HCT116 (cell line): ENCODE measurements at regions of chr2 and their contacts with region 1.

Region 1: GRCh38 chr2:180980106-180980942 is at the start of gene UBE2E3:
- DNase-seq: peak; percentile 48
- ATAC-seq: peak; percentile 86
- H3K4me3 ChIP-seq: peak within 1 kb of the TSS; percentile 87 to 88
- H3K27ac ChIP-seq: peak within 1 kb of the TSS; percentile 56
- H3K4me1 ChIP-seq: peaks cover 19 to 34% of the 10 kb centered on the region in 2 experiments; a peak in 3 of 4 replicates
- H3K27me3 ChIP-seq: no peaks in the 10 kb centered on the region
- CTCF ChIP-seq: peak in 2 of 3 experiments; percentile 62 to 65; a peak in 4 of 6 replicates
- POLR2A ChIP-seq: no peak
- RAD21 ChIP-seq: peak; percentile 34; the same call in 1 of the 2 replicates
- total RNA-seq, gene UBE2E3: 64.2 TPM

Region 2: GRCh38 chr2:180125245-180125962 is 854.9 kb before region 1 on chr2:
- CTCF ChIA-PET with region 1: interaction called, 13 read pairs
- POLR2A ChIA-PET with region 1: no interaction called
- RAD21 ChIA-PET with region 1: interaction called in 1 of 2 experiments, 3 read pairs
- intact Hi-C with region 1: no loop called
- DNase-seq: peak; percentile 84
- ATAC-seq: peak; percentile 92
- H3K4me3 ChIP-seq: 0 out of 4 replicates have a peak overlapping the region, but pooled peaks of 1 of the 2 experiments have one; percentile 9
- H3K27ac ChIP-seq: no peak overlapping the region
- H3K4me1 ChIP-seq: peaks cover 0 to 14% of the 10 kb centered on the region in 2 experiments; a peak in 2 of 4 replicates
- H3K27me3 ChIP-seq: no peaks in the 10 kb centered on the region
- CTCF ChIP-seq: peak; percentile 65 to 75 (median 72); a peak in 5 of 6 replicates
- POLR2A ChIP-seq: no peak
- RAD21 ChIP-seq: peak; percentile 90

Region 3: DNA sequence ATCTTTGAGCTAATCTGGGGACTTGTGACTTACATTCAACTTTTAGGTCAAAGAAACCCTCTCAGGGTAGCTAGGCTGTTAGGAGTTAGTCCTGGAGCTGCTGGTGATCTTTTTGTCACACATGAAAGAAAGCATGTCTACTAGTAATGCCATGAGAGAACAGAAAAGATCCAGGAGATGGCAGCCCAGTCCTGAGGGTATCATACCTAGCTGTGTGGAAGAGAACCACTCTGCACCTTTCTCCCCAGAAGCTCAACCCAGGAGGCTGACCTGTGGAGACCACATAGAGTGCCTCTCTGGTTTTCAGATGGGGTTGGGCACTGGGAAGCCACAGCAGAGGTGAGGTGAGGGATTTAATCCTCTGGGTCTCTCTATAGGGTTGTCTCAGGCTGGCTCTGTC is 460.1 kb before region 1 on chr2:
- CTCF ChIA-PET with region 1: interaction called, 5 read pairs
- POLR2A ChIA-PET with region 1: no interaction called
- RAD21 ChIA-PET with region 1: interaction called in 1 of 2 experiments, 3 read pairs
- intact Hi-C with region 1: loop called (anchors 2 kb)
- DNase-seq: peak; percentile 33
- ATAC-seq: peak; percentile 70
- H3K4me3 ChIP-seq: no peak overlapping the region
- H3K27ac ChIP-seq: no peak overlapping the region
- H3K4me1 ChIP-seq: peaks cover 6 to 58% of the 10 kb centered on the region in 2 experiments; a peak in 3 of 4 replicates
- H3K27me3 ChIP-seq: no peaks in the 10 kb centered on the region
- CTCF ChIP-seq: peak; percentile 11 to 25 (median 18); a peak in 1 of 6 replicates
- POLR2A ChIP-seq: no peak
- RAD21 ChIP-seq: peak; percentile 62